Right ventricle myocardium superior (tissue), 1 donor: ENCODE measurements at regions of chr7 and their contacts with region 1.

Region 1: GRCh38 chr7:157397731-157398691 is 61.2 kb downstream of the DNAJB6 start:
- DNase-seq: peak; percentile 78
- ATAC-seq: peak; percentile 72

Region 2: GRCh38 chr7:157339777-157340677 is 58.0 kb before region 1 on chr7:
- intact Hi-C with region 1: loop called (anchors 5 kb)
- DNase-seq: peak; percentile 74
- ATAC-seq: peak; percentile 25

Region 3: DNA sequence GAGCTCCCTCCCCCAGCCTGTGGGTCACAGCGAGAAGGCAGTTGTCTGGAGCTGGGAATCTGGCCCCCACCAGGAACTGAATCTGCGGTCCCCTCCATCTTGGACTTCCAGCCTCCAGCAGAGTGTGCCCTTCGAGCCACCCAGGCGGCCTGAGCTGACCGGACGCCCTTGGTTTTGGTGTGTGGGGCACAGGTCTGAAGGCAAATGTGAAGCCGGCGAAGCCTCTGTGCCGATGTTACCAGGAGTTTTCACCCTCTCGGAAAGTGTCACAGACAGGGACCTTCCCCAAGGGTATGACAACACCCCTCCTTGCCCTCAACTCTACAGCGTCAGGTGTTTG is 47.9 kb after region 1 on chr7:
- intact Hi-C with region 1: no loop called
- DNase-seq: no peak
- ATAC-seq: no peak

Region 4: GRCh38 chr7:157502701-157503111 is 104.7 kb after region 1 on chr7:
- intact Hi-C with region 1: no loop called
- DNase-seq: peak; percentile 48
- ATAC-seq: no peak

Region 5: DNA sequence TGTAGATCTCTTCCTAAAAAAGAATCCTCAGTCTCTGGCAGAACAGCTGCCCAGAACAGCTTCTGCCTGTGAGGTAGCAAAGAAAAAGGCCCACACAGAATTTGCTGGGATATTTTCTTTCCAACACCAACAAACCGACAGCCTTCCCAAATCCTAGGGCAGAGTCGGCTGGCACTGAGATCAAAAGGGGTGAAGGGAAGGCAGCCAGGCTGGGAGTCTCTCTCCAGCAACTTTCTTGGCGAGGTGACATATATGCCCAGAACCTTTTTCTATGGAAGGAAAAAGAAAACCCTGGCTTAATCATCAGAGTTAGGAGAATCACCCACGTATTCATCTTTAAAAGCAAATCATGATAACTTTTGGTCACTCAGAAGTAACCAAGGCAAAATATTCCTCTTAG is 218.4 kb after region 1 on chr7:
- intact Hi-C with region 1: no loop called
- DNase-seq: no peak
- ATAC-seq: no peak